ENCODE measurements at regions of chr6 and their contacts with region 1.

Region 1: DNA sequence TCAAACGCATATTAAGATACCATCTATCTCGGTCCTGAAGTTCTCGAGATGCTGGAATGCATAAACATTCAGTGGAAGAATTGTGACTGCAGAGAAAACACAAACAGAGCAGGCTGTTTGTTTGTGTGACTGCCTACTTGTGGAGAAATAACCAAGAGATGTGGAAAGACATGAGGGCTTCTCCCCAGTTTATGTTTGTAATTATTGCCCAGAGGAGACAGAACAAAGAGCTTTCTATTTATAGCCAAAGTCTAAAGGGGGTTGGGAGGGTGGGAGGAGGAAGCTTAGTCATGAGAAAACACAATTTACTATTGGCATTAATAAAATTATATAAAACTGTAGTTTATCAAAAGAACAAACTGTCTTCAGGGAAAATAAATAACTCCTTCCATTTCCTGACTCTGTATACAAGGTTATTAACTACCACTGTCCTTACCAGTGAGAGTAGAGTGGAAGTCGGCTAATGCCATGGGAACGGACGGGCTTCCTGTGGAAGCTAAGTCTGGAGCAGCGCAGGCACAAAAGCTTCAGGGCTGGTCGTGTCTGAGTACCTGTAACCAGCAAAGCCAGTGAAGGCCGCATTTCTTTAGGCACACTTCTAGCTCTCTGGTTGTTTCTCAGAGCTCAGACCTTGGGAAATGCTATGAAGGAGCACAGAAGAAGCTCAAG is 200.2 kb upstream of the SUPT3H start:
- DNase-seq: no peak
- ATAC-seq: no peak
- H3K4me3 ChIP-seq: no peak overlapping the region
- H3K4me3 Mint-ChIP-seq: no peak overlapping the region
- H3K27ac ChIP-seq: no peak overlapping the region
- H3K27ac Mint-ChIP-seq: no peak overlapping the region
- H3K4me1 ChIP-seq: peaks cover 8% of the 10 kb centered on the region
- H3K4me1 Mint-ChIP-seq: peaks cover 16% of the 10 kb centered on the region
- H3K27me3 ChIP-seq: no peaks in the 10 kb centered on the region
- H3K27me3 Mint-ChIP-seq: no peaks in the 10 kb centered on the region
- CTCF ChIP-seq: no peak

Region 2: GRCh38 chr6:45555981-45556771 is 21.8 kb before region 1 on chr6:
- CTCF ChIA-PET with region 1: no interaction called
- POLR2A ChIA-PET with region 1: no interaction called
- intact Hi-C with region 1: loop called in 1 of 2 experiments (anchors 2 kb)
- DNase-seq: no peak
- ATAC-seq: no peak
- H3K4me3 ChIP-seq: no peak overlapping the region
- H3K4me3 Mint-ChIP-seq: no peak overlapping the region
- H3K27ac ChIP-seq: no peak overlapping the region
- H3K27ac Mint-ChIP-seq: no peak overlapping the region
- H3K4me1 ChIP-seq: peaks cover 5% of the 10 kb centered on the region
- H3K4me1 Mint-ChIP-seq: peaks cover 29% of the 10 kb centered on the region
- H3K27me3 ChIP-seq: no peaks in the 10 kb centered on the region
- H3K27me3 Mint-ChIP-seq: no peaks in the 10 kb centered on the region
- CTCF ChIP-seq: no peak

Measured in CD4-positive, alpha-beta T cell (primary cell).